Left colon (tissue), 2 donors: ENCODE measurements at regions of chr11 and their contacts with region 1.

Region 1: GRCh38 chr11:10933455-10934292 is 75.8 kb upstream of the ZBED5 start:
- DNase-seq: peak; percentile 91 to 92
- ATAC-seq: peak; percentile 72

Region 2: DNA sequence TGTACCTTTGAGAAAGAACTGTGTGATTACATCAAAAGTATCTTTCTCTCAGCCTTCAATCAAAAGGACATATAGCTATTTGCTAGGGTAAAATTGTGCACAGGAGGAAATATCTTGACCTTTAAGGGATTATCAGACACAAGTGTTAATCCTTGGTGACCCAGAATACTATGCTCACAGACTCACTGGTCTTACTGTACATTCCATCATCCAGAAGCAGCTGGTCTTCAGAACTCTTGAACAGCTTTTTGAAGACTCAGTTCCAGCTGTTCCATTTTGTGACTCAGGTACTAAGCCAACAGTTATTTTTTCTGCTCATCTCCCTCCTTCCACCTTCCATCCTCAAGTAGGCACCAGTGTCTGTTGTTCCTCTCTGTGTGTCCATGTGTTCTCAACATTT is 95.6 kb before region 1 on chr11:
- intact Hi-C with region 1: no loop called
- DNase-seq: no peak
- ATAC-seq: no peak

Region 3: DNA sequence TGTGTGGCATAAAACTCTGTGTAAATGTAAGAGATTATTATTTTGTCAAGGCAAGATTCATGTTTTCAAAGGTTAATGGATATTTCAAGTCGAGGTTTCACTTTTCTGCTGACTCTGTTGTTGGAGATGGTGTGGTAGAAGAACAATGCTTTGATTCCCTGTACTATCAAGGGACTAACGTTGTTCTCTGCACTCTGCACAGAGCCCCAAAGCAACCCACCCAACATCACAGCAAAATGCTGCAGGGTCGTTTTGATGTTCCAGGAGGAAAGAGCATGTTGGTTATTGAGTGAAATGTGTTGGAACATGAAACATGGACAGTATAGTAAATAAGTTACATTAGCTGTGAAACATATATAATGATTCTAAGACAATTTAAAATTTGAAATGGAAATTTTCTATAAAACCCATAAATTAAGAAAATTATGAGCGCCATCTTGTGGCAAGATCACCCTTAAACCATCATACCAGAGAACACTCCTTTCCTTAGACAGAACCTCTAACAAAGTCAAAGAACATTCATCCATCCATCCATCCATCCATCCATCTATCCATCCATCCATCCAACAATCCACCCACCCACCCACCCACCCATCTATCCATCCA is 88.6 kb after region 1 on chr11:
- intact Hi-C with region 1: loop called in 1 of 2 experiments (anchors 5 kb)
- DNase-seq: no peak
- ATAC-seq: no peak